Mammary epithelial cell (primary cell): ENCODE measurements at regions of chr3 and their contacts with region 1.

Region 1: DNA sequence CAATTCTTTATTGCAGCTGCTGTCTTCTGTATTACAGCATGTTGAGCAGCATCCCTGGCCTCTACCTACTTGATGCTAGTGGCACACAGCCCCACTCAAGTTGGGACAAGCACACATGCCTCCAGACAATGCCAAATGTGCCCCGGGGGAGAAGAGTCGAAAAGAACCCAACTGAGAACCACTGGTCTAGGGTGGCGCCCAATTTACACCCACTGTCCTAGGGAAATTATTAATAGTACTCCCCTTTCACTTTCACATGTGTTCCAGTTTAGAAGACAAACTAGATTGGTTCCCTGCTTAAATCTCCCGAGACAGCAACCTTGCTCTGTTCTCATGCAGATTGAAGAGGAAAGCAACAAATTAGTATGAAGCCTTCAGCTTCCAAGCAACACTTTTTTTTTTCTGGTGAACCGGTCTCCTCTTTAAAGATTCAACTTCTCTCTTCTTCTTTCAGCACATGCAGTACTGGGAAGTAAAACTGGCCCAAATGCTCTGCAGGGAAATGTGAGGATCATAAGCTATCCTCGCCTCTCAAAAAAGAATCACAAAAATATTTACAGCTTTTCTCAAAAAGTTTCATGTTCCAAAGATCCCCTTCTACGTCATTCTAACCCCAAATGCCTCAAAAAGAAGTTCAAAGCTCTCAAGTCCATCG is 823.9 kb upstream of the CFAP20DC start:
- DNase-seq: no peak
- H3K4me3 ChIP-seq: no peak overlapping the region
- H3K27ac ChIP-seq: no peak overlapping the region
- H3K4me1 ChIP-seq: peaks cover 5% of the 10 kb centered on the region
- H3K27me3 ChIP-seq: no peaks in the 10 kb centered on the region
- CTCF ChIP-seq: no peak

Region 2: GRCh38 chr3:59783468-59783988 is 90.2 kb before region 1 on chr3:
- CTCF ChIA-PET with region 1: no interaction called
- dilution Hi-C with region 1: no loop called
- in situ Hi-C with region 1: no loop called
- intact Hi-C with region 1: no loop called
- DNase-seq: no peak
- H3K4me3 ChIP-seq: no peak overlapping the region
- H3K27ac ChIP-seq: no peak overlapping the region
- H3K4me1 ChIP-seq: no peaks in the 10 kb centered on the region
- H3K27me3 ChIP-seq: no peaks in the 10 kb centered on the region
- CTCF ChIP-seq: no peak

Region 3: GRCh38 chr3:59935025-59935424 is 61.3 kb after region 1 on chr3:
- CTCF ChIA-PET with region 1: no interaction called
- dilution Hi-C with region 1: no loop called
- in situ Hi-C with region 1: no loop called
- intact Hi-C with region 1: no loop called
- DNase-seq: no peak
- H3K4me3 ChIP-seq: no peak overlapping the region
- H3K27ac ChIP-seq: no peak overlapping the region
- H3K4me1 ChIP-seq: no peaks in the 10 kb centered on the region
- H3K27me3 ChIP-seq: no peaks in the 10 kb centered on the region
- CTCF ChIP-seq: no peak

Region 4: DNA sequence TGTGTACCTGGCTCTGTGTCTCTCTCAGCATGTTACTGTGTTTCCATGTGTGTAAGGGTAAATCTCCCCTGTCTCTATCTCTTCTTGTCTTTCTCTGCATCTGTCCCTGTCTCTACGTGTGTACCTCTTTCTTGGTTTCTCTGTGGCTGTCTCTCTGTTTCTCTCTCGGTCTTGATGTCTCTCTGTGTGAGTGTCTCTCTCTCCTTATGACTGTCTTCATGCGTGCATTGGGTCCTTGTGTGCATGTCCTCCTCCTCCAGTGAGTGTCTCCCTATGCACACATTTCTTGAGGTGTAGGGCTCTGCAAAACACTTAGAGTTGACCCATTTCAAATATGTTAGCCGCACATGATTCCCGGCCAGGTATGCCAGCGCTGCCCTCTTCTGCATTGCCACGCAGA is 79.4 kb after region 1 on chr3:
- CTCF ChIA-PET with region 1: no interaction called
- dilution Hi-C with region 1: loop called (anchors 5 kb)
- in situ Hi-C with region 1: no loop called
- intact Hi-C with region 1: no loop called
- DNase-seq: no peak
- H3K4me3 ChIP-seq: no peak overlapping the region
- H3K27ac ChIP-seq: no peak overlapping the region
- H3K4me1 ChIP-seq: no peaks in the 10 kb centered on the region
- H3K27me3 ChIP-seq: no peaks in the 10 kb centered on the region
- CTCF ChIP-seq: no peak